Activated naive CD4-positive, alpha-beta T cell treated with anti-CD3 and anti-CD28 coated beads for 36 hours (primary cell): ENCODE measurements at regions of chr1 and their contacts with region 1.

Region 1: GRCh38 chr1:200302192-200302920 is 107.5 kb downstream of the ZNF281 start:
- DNase-seq: peak; percentile 71
- H3K4me3 Mint-ChIP-seq: peak overlapping the region; percentile 75
- H3K27ac Mint-ChIP-seq: no peak overlapping the region
- H3K4me1 Mint-ChIP-seq: peaks cover 14% of the 10 kb centered on the region
- H3K27me3 Mint-ChIP-seq: no peaks in the 10 kb centered on the region

Region 2: GRCh38 chr1:199684686-199685273 is 617.6 kb before region 1 on chr1:
- CTCF ChIA-PET with region 1: no interaction called
- intact Hi-C with region 1: loop called (anchors 1 kb)
- DNase-seq: peak; percentile 31
- H3K4me3 Mint-ChIP-seq: no peak overlapping the region
- H3K27ac Mint-ChIP-seq: no peak overlapping the region
- H3K4me1 Mint-ChIP-seq: no peaks in the 10 kb centered on the region
- H3K27me3 Mint-ChIP-seq: peaks cover 13% of the 10 kb centered on the region

Region 3: DNA sequence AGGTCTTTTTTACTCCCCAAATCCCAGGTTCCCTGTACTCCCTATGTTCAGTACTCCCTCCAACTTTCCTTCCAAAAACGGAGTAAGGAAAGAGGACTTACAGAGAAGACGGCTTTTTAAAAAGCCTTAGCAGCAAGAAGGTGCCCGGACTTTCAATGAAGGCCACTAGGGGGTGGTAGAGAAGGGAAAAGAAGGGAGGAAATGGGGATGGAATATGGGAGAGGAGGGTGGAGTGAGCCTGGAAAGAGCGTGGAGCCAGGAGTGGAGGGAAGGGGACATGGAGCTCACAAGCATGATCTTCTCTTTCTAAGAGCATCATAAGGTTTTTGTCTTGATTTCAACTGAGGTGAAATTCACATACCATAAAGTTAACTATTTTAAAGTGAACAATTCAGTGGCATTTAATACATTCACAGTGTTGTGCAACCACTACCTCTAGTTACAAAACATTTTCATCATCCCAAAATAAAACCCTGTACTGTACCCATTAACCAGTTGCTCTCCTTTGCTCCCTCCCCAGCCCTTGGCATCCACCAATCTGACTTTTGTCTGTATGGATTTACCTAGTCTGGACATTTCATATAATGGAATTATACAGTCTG is 22.4 kb before region 1 on chr1:
- CTCF ChIA-PET with region 1: interaction called, 13 read pairs
- intact Hi-C with region 1: no loop called
- DNase-seq: peak; percentile 62
- H3K4me3 Mint-ChIP-seq: no peak overlapping the region
- H3K27ac Mint-ChIP-seq: no peak overlapping the region
- H3K4me1 Mint-ChIP-seq: no peaks in the 10 kb centered on the region
- H3K27me3 Mint-ChIP-seq: no peaks in the 10 kb centered on the region

Region 4: GRCh38 chr1:200351826-200352549 is 49.6 kb after region 1 on chr1:
- CTCF ChIA-PET with region 1: interaction called, 3 read pairs
- intact Hi-C with region 1: loop called (anchors 5 kb)
- DNase-seq: peak; percentile 46
- H3K4me3 Mint-ChIP-seq: peak overlapping the region; percentile 29
- H3K27ac Mint-ChIP-seq: peak overlapping the region; percentile 43
- H3K4me1 Mint-ChIP-seq: peaks cover 33% of the 10 kb centered on the region
- H3K27me3 Mint-ChIP-seq: no peaks in the 10 kb centered on the region

Region 5: DNA sequence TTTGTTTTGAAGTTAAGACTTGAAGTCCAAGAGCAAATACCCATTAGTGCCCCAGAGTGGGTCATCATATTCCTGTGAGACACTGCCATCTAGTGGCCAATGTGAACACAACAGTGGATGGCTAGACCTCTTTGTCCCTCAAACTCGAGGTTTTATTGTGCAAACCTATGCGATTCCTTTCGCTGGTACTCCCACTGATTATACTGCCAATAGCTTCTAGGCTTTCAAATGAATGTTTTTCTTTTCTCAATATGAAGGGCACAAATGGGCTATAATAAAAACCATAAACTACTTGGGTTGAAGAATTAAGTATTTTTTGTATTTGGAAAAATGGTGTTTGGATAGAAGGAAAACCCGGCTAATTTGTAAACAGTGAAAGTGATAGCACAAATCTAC is 207.9 kb after region 1 on chr1:
- CTCF ChIA-PET with region 1: interaction called, 5 read pairs
- intact Hi-C with region 1: loop called (anchors 2 kb)
- DNase-seq: peak; percentile 85
- H3K4me3 Mint-ChIP-seq: no peak overlapping the region
- H3K27ac Mint-ChIP-seq: no peak overlapping the region
- H3K4me1 Mint-ChIP-seq: peaks cover 3% of the 10 kb centered on the region
- H3K27me3 Mint-ChIP-seq: no peaks in the 10 kb centered on the region